Right lobe of liver (tissue), 6 donors: ENCODE measurements at regions of chr12 and their contacts with region 1.

Region 1: DNA sequence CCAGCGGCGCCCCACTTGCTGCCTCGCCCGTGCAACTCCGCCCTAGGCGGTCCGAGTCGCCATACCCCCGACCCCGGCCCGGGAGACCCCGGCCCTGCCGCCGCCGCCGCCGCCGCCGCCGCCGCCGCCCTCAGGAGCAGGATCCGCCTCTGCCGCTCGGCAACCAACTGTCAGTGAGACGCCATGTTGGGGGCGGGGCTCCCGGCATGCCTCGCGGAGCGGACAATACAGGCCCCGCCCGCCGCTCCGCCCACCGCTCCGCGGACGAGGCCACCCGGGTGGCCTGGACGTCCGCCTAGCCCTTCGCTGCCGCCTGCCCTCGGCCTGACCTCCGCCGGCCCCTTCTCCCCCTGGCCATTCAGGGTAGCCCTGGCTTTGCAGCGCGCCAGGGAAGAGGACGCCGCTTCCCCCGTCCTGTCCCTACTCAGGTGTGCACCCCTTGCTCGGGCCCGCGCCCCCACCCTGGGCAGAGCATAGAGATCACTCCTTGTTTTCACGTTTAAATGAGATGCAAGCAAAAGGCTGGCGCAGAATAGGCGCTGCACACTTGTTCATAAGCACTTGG is at the start of gene HECTD4:
- DNase-seq: peak; percentile 98
- ATAC-seq: peak; percentile 99 to 100 (median 100)
- H3K4me3 ChIP-seq: peak within 1 kb of the TSS; percentile 94 to 98 (median 98)
- H3K27ac ChIP-seq: peak within 1 kb of the TSS; percentile 29 to 77 (median 70)
- H3K4me1 ChIP-seq: peaks cover 0 to 10% (median under 1%) of the 10 kb centered on the region in 4 donors
- H3K27me3 ChIP-seq: no peaks in the 10 kb centered on the region
- CTCF ChIP-seq: no peak
- POLR2A ChIP-seq: peak; percentile 62
- total RNA-seq, gene HECTD4: 12.6 to 24.4 (median 19.3) TPM

Region 2: GRCh38 chr12:112198120-112198733 is 184.1 kb before region 1 on chr12:
- intact Hi-C with region 1: loop called (anchors 10 kb)
- DNase-seq: peak in 2 of 3 donors; percentile 57 to 71
- ATAC-seq: peak; percentile 94 to 98 (median 94)
- H3K4me3 ChIP-seq: no peak overlapping the region
- H3K27ac ChIP-seq: no peak overlapping the region
- H3K4me1 ChIP-seq: no peaks in the 10 kb centered on the region
- H3K27me3 ChIP-seq: no peaks in the 10 kb centered on the region
- CTCF ChIP-seq: peak; percentile 58 to 66 (median 64)
- POLR2A ChIP-seq: no peak

Region 3: GRCh38 chr12:112303004-112303403 is 79.3 kb before region 1 on chr12:
- intact Hi-C with region 1: no loop called
- DNase-seq: no peak
- ATAC-seq: no peak
- H3K4me3 ChIP-seq: no peak overlapping the region
- H3K27ac ChIP-seq: no peak overlapping the region
- H3K4me1 ChIP-seq: peaks cover 0 to 23% (median 4%) of the 10 kb centered on the region in 4 donors
- H3K27me3 ChIP-seq: no peaks in the 10 kb centered on the region
- CTCF ChIP-seq: no peak
- POLR2A ChIP-seq: no peak